Endothelial cell of umbilical vein (primary cell): ENCODE measurements at regions of chr12 and their contacts with region 1.

Region 1: GRCh38 chr12:121128970-121129810 is 3.5 kb upstream of the P2RX7 start:
- DNase-seq: peak; percentile 79
- H3K4me3 ChIP-seq: peak overlapping the region in 1 of 3 experiments; percentile 18
- H3K27ac ChIP-seq: peak overlapping the region; percentile 18
- H3K4me1 ChIP-seq: peaks cover 25% of the 10 kb centered on the region
- H3K27me3 ChIP-seq: no peaks in the 10 kb centered on the region
- CTCF ChIP-seq: no peak
- POLR2A ChIP-seq: no peak

Region 2: GRCh38 chr12:121170611-121171260 is 41.5 kb after region 1 on chr12:
- CTCF ChIA-PET with region 1: no interaction called
- POLR2A ChIA-PET with region 1: no interaction called
- dilution Hi-C with region 1: no loop called
- intact Hi-C with region 1: loop called (anchors 2 kb)
- DNase-seq: peak; percentile 28
- H3K4me3 ChIP-seq: no peak overlapping the region
- H3K27ac ChIP-seq: peak overlapping the region; percentile 64
- H3K4me1 ChIP-seq: peaks cover 11% of the 10 kb centered on the region
- H3K27me3 ChIP-seq: no peaks in the 10 kb centered on the region
- CTCF ChIP-seq: no peak
- POLR2A ChIP-seq: no peak

Region 3: GRCh38 chr12:121209624-121210572 is 80.7 kb after region 1 on chr12 and contains the start of gene P2RX4:
- CTCF ChIA-PET with region 1: interaction called, 3 read pairs
- POLR2A ChIA-PET with region 1: interaction called, 3 read pairs
- dilution Hi-C with region 1: no loop called
- intact Hi-C with region 1: loop called (anchors 1 kb)
- DNase-seq: peak; percentile 76
- H3K4me3 ChIP-seq: peak within 1 kb of the TSS; percentile 35 to 75 (median 52)
- H3K27ac ChIP-seq: peak within 1 kb of the TSS; percentile 59
- H3K4me1 ChIP-seq: peaks cover 23% of the 10 kb centered on the region
- H3K27me3 ChIP-seq: no peaks in the 10 kb centered on the region
- CTCF ChIP-seq: peak; percentile 16 to 23
- POLR2A ChIP-seq: peak; percentile 78
- total RNA-seq, gene P2RX4: 72.8 and 116 TPM in 2 replicates

Region 4: GRCh38 chr12:121230538-121230907 is 101.3 kb after region 1 on chr12:
- CTCF ChIA-PET with region 1: interaction called, 3 read pairs
- POLR2A ChIA-PET with region 1: no interaction called
- dilution Hi-C with region 1: no loop called
- intact Hi-C with region 1: loop called (anchors 2 kb)
- DNase-seq: no peak
- H3K4me3 ChIP-seq: no peak overlapping the region
- H3K27ac ChIP-seq: no peak overlapping the region
- H3K4me1 ChIP-seq: no peaks in the 10 kb centered on the region
- H3K27me3 ChIP-seq: no peaks in the 10 kb centered on the region
- CTCF ChIP-seq: no peak
- POLR2A ChIP-seq: no peak